GM12878 (cell line): ENCODE measurements at regions of chrX and their contacts with region 1.

Region 1: DNA sequence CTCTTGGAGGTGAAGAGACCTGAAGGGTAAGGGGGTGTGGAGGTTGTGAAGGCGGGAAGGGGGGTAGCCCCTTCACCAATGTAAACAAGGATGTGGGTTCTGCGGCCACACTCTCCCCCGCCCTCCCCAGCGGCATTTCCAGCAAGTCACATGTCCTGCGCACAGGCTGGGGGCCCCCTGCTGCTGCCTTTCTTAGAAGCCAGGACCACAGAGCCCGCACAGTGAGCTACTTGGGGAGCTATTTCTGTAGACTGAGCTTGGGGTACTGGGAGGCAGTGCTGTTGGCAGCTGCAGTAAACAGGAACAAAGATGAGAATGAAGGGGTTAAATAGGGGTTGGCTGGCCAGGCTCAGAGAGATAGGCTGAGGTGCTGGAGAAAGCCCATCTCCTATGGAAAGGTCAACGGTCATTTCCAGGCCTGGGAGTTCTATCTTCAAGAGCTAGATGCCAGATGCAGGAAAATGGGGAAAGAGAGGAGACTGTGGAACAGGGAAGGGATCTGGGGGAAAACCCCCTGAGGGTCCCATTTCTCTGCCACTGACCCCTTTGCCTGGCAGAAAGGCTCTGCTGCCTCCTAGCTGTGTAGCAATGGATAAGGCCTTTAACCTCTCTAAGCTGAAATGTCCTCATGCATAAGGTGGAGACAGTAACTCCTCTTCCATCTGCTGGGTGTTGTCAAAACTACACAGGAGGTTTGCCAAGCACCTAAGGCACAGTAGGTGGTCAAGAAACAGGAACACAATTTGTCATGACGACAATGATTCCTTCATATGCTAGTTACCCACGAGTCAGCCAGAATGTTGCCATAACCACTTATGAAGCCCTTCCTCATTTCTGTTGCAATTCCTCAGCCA is 18.5 kb upstream of the PIM2 start:
- DNase-seq: peak; percentile 79
- ATAC-seq: peak; percentile 74
- H3K4me3 ChIP-seq: peak overlapping the region; percentile 28; the same call in 1 of the 2 replicates
- H3K27ac ChIP-seq: peak overlapping the region; percentile 95
- H3K4me1 ChIP-seq: peaks cover 73% of the 10 kb centered on the region
- H3K27me3 ChIP-seq: no peaks in the 10 kb centered on the region
- CTCF ChIP-seq: peak; percentile 41 to 57 (median 56); a peak in 5 of 6 replicates
- EP300 ChIP-seq: peak; percentile 97 to 98
- POLR2A ChIP-seq: peak; percentile 65
- RAD21 ChIP-seq: peak; percentile 57

Region 2: DNA sequence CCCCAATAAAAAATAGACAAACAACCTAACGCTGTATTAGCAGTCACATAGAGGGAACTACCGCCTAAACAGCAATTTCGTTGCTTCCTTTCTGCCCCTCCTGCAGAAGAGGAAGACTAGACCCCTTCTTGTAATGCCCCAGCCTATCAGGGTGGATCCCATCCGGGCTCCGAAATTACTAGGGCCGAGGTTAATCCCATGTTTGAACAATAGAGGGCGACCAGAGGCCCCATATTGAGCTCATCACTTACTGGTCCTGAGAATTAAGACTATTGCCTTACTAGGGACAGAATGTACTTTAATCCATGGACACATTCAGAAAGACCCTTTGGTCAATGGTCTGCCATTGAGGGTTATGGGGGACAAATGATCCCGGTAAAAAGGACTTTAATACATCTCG is 854.1 kb before region 1 on chrX:
- CTCF ChIA-PET with region 1: no interaction called
- POLR2A ChIA-PET with region 1: no interaction called
- RAD21 ChIA-PET with region 1: no interaction called
- SMC1A ChIA-PET with region 1: no interaction called
- in situ Hi-C with region 1: no loop called
- intact Hi-C with region 1: loop called (anchors 5 kb)
- DNase-seq: no peak
- ATAC-seq: peak; percentile 94
- H3K4me3 ChIP-seq: no peak overlapping the region
- H3K27ac ChIP-seq: no peak overlapping the region
- H3K4me1 ChIP-seq: no peaks in the 10 kb centered on the region
- H3K27me3 ChIP-seq: no peaks in the 10 kb centered on the region
- CTCF ChIP-seq: peak; percentile 55 to 63 (median 57)
- EP300 ChIP-seq: no peak
- POLR2A ChIP-seq: no peak
- RAD21 ChIP-seq: peak; percentile 76

Region 3: DNA sequence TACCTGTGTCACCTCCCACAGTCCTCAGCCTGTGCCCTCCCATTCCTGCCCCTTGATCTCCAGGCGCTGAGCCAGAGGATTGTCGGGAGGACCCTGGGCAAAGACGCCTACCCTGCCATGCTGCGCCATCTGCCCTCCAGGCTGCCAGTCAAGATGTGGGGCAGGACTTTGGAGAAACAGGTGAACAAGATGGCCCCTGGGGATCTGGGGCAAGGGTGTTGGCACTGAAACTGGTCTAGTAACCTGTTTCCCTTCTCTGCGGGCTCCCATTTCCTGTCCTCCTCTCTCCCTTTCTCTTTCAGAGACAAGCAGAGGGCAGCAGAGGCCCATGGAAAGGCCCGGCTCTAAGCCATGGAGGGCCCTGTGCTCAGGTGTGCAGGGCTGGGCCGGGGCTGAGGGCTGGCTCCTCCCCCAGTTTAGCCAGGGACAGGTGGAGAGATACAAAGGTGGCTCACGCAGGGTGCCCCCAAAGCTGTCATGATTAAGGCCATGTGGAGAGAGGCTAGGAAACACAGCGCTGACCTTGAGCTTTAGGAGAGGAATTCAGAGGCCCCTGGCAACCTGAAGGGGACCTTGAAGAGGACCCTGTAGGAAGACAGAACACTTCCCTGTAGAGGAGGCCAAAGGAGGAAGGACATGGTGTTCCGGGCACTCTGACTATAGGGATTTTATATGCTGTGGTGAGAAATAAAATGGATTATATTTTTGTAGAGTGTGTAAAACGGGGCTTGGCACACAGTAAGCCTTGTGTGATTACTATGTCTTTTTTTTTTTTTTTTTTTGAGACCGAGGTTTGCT is 175.4 kb before region 1 on chrX and contains the start of gene GLOD5:
- CTCF ChIA-PET with region 1: no interaction called
- POLR2A ChIA-PET with region 1: no interaction called
- RAD21 ChIA-PET with region 1: no interaction called
- SMC1A ChIA-PET with region 1: no interaction called
- in situ Hi-C with region 1: no loop called
- intact Hi-C with region 1: no loop called
- DNase-seq: no peak
- ATAC-seq: peak; percentile 75
- H3K4me3 ChIP-seq: no peak within 1 kb of the TSS
- H3K27ac ChIP-seq: no peak within 1 kb of the TSS
- H3K4me1 ChIP-seq: no peaks in the 10 kb centered on the region
- H3K27me3 ChIP-seq: no peaks in the 10 kb centered on the region
- CTCF ChIP-seq: peak in 1 of 3 experiments; percentile 26; a peak in 2 of 6 replicates
- EP300 ChIP-seq: no peak
- POLR2A ChIP-seq: no peak
- RAD21 ChIP-seq: peak; percentile 53
- polyA plus RNA-seq, gene GLOD5: not detected

Region 4: DNA sequence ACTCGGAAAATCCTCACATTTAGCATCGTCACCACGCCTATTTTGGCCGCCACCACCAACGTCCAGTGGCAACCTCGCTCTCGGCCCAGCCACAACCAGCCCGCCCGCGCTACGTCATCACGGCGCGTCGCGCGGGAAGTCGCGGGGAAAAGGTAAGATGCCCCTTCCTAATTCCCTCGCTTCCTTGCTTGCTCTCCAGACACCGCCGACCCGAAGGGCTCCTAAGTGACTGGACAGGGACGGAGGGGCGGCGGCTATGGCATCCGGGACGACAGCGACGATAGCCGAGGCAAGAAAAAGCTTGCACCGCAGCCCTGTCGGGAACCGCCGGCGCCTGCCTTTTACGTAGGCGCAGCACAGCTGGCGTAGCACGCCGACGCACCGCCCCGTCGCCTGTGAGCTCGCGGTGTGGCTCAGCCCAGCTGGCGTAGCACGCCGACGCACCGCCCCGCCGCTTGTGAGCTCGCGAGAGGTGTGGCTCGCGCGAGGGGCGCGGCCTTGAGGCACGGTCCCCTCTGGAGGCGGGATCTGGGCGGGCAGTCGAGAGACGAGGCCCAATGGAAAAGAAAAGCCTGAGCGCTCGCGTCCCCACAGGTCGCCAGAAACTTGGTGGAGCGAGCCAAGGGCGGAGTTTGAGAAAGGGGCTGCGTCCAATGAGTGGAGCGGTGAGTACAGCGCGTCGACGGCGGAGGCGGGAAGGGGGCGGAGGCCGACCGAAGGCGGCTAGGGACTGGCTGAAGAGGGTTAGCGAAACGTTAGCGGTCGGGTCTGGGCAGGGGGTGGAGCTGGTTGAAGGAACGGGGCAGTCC is 135.8 kb before region 1 on chrX and contains the start of gene HDAC6:
- CTCF ChIA-PET with region 1: no interaction called
- POLR2A ChIA-PET with region 1: interaction called, 5 read pairs
- RAD21 ChIA-PET with region 1: interaction called, 7 read pairs
- SMC1A ChIA-PET with region 1: interaction called, 3 read pairs
- in situ Hi-C with region 1: no loop called
- intact Hi-C with region 1: loop called (anchors 5 kb)
- DNase-seq: peak; percentile 94
- ATAC-seq: peak; percentile 90
- H3K4me3 ChIP-seq: peak within 1 kb of the TSS; percentile 69
- H3K27ac ChIP-seq: peak within 1 kb of the TSS; percentile 94
- H3K4me1 ChIP-seq: no peaks in the 10 kb centered on the region
- H3K27me3 ChIP-seq: no peaks in the 10 kb centered on the region
- CTCF ChIP-seq: no peak
- EP300 ChIP-seq: no peak
- POLR2A ChIP-seq: peak; percentile 75
- RAD21 ChIP-seq: no peak
- polyA plus RNA-seq, gene HDAC6: 8.3 to 17.5 TPM

Region 5: DNA sequence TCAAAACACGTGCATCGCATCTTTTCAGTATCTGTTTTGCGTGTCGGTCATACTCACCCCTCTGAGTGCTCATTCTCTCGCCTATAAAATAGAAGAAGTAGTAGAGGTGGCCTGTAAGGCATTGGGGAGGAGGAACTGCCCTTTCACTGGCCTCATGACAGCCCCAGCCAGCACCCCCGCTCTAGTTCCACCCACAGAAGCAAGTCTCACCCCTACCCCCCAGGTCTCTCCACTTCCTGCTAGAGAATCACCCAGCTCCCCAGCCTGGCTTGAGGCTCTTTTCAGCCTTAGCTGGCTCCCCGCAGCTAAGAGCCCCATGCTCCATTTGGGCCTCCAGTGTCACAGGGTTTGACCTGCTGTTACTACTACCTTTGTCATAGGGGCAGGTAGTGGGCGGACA is 123.6 kb before region 1 on chrX:
- CTCF ChIA-PET with region 1: no interaction called
- POLR2A ChIA-PET with region 1: no interaction called
- RAD21 ChIA-PET with region 1: no interaction called
- SMC1A ChIA-PET with region 1: no interaction called
- in situ Hi-C with region 1: no loop called
- intact Hi-C with region 1: no loop called
- DNase-seq: no peak
- ATAC-seq: no peak
- H3K4me3 ChIP-seq: no peak overlapping the region
- H3K27ac ChIP-seq: no peak overlapping the region
- H3K4me1 ChIP-seq: no peaks in the 10 kb centered on the region
- H3K27me3 ChIP-seq: no peaks in the 10 kb centered on the region
- CTCF ChIP-seq: no peak
- EP300 ChIP-seq: no peak
- POLR2A ChIP-seq: no peak
- RAD21 ChIP-seq: no peak

Region 6: DNA sequence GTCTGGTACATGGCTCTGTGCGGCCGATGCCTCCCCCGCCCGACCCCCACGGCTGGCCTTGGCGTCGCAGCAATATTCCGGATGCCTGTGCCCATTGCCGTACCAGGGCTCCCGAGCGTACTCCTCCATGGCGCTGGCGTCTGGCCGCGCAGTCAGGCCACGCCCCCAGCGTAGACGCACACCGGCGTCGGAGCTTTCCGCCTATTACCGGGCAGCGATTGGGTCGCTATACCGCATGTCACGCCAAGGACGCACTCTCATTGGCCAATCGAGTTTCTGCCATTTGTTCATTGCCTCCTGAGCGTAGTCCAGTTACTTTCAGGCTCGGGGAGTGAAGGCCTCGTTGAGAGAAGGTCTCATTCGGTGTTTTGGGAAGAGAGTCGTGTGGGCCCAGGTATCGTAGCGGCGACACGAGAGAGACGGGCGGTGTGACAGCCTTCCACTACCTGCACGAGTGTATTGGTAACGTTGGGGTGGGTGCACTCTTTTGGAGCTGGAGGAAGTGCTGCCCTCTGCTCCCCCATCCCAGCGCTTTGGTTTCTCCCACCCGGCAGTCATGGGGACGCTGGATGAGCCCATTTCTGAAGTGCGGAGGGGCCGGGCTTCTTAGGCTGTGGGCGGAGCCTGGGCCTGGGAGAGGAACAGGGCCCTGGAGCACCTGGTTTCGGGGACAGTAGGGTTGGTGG is 39.5 kb before region 1 on chrX and contains the starts of genes PQBP1 and TIMM17B:
- CTCF ChIA-PET with region 1: interaction called, 7 read pairs
- POLR2A ChIA-PET with region 1: interaction called, 10 read pairs
- RAD21 ChIA-PET with region 1: interaction called, 15 read pairs
- SMC1A ChIA-PET with region 1: interaction called, 6 read pairs
- in situ Hi-C with region 1: no loop called
- intact Hi-C with region 1: no loop called
- DNase-seq: peak; percentile 92
- ATAC-seq: peak; percentile 94
- H3K4me3 ChIP-seq: peak within 1 kb of the TSS; percentile 77
- H3K27ac ChIP-seq: peak within 1 kb of the TSS; percentile 93
- H3K4me1 ChIP-seq: no peaks in the 10 kb centered on the region
- H3K27me3 ChIP-seq: no peaks in the 10 kb centered on the region
- CTCF ChIP-seq: no peak
- EP300 ChIP-seq: no peak
- POLR2A ChIP-seq: peak; percentile 86
- RAD21 ChIP-seq: no peak
- polyA plus RNA-seq, gene PQBP1: 12.5 to 28.0 TPM
- polyA plus RNA-seq, gene TIMM17B: 4.5 to 18.3 TPM

Region 7: DNA sequence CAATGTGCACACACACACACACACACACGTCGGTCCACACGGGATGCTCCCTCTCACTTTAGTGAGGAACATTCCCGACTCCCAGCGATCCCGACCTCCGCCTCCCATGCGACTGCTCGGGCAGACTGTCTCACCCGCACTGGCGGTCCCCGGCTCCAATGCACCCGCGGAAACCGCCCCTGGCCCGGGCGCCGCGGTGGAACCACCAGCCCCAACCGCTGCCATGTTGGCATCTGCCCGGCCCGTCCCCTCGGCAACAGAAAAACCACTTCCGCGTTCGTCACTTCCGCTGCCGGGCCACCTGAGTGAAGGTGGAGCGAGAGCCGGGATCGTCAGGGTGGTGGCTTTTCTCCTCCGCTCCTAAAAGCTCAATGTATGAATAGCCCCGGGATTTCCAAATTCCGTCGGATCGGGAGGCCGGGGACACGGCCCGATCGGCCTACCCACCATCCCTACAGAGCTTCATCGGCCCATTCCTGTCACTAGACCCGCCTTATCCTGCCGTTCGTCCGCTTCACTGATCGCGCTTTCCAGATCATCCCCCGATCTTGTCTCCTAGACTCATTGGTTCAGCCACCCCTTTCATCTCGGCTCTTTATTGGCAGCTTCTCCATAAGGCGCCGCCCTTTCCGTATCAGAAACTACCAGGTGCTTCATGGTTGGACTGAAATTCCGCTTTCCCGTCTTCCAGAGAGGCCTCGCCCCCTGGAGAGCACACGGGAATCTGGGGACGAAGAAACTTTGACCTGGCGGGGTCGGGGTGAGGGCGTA is 25.7 kb before region 1 on chrX and contains the start of gene SLC35A2:
- CTCF ChIA-PET with region 1: interaction called, 9 read pairs
- POLR2A ChIA-PET with region 1: interaction called, 11 read pairs
- RAD21 ChIA-PET with region 1: interaction called, 10 read pairs
- SMC1A ChIA-PET with region 1: interaction called, 9 read pairs
- in situ Hi-C with region 1: no loop called
- intact Hi-C with region 1: no loop called
- DNase-seq: no peak
- ATAC-seq: peak; percentile 86
- H3K4me3 ChIP-seq: peak within 1 kb of the TSS; percentile 62
- H3K27ac ChIP-seq: peak within 1 kb of the TSS; percentile 68
- H3K4me1 ChIP-seq: no peaks in the 10 kb centered on the region
- H3K27me3 ChIP-seq: no peaks in the 10 kb centered on the region
- CTCF ChIP-seq: no peak
- EP300 ChIP-seq: no peak
- POLR2A ChIP-seq: peak; percentile 89; the same call in 1 of the 2 replicates
- RAD21 ChIP-seq: no peak
- polyA plus RNA-seq, gene SLC35A2: 2.1 to 6.8 TPM

Region 8: GRCh38 chrX:48917139-48918001 is 19.9 kb before region 1 on chrX:
- CTCF ChIA-PET with region 1: interaction called, 9 read pairs
- POLR2A ChIA-PET with region 1: interaction called, 21 read pairs
- RAD21 ChIA-PET with region 1: interaction called, 10 read pairs
- SMC1A ChIA-PET with region 1: interaction called, 12 read pairs
- in situ Hi-C with region 1: no loop called
- intact Hi-C with region 1: loop called (anchors 1 kb)
- DNase-seq: peak; percentile 88
- ATAC-seq: peak; percentile 62
- H3K4me3 ChIP-seq: peak overlapping the region; percentile 65
- H3K27ac ChIP-seq: peak overlapping the region; percentile 83
- H3K4me1 ChIP-seq: peaks cover 9% of the 10 kb centered on the region
- H3K27me3 ChIP-seq: no peaks in the 10 kb centered on the region
- CTCF ChIP-seq: peak; percentile 86 to 97 (median 91)
- EP300 ChIP-seq: peak in 1 of 2 experiments; percentile 67; a peak in 2 of 4 replicates
- POLR2A ChIP-seq: peak; percentile 67
- RAD21 ChIP-seq: peak; percentile 55

Region 9: DNA sequence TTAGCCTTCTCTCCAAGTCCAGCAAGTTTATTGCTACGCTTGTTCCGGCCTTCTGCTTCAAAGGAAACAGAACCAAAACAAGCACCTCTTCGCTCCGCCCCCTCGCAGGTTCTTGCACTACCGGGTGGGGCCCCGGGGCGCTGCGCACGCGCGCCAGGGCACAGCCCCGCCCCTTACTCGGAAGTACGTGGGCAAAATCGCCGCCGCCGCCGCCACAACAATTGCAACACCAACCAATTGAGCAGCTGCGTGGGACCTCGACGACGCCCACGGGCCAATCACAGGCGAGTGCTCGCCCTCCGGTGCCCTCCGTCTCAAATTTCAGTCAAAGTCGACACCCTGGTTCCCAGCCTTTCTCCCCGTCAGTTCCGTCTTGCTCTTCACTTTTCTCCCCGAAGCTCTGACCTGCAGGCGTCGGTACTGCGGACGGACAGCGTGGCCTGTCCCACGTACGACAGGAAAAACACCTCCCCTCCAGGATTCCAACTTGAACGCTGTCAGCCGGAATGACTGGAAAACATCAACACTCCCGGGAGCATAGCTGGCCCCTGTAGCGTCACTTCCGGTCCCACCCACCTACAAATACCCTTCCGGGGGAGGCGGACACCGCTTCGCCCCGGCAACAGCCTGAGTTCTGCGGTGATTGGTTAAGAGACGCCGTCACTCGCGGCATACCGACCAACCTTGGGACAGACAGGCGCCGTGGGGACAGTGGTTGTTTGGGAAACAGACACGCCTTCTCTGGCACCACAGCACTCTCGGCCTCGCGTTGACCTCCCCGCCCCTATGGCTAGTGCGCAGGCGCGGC is 20.8 kb after region 1 on chrX:
- CTCF ChIA-PET with region 1: interaction called, 4 read pairs
- POLR2A ChIA-PET with region 1: interaction called, 12 read pairs
- RAD21 ChIA-PET with region 1: interaction called, 7 read pairs
- SMC1A ChIA-PET with region 1: interaction called, 8 read pairs
- in situ Hi-C with region 1: no loop called
- intact Hi-C with region 1: no loop called
- DNase-seq: peak; percentile 87
- ATAC-seq: peak; percentile 93
- H3K4me3 ChIP-seq: peak overlapping the region; percentile 79; the same call in 1 of the 2 replicates
- H3K27ac ChIP-seq: peak overlapping the region; percentile 92
- H3K4me1 ChIP-seq: peaks cover 7% of the 10 kb centered on the region
- H3K27me3 ChIP-seq: no peaks in the 10 kb centered on the region
- CTCF ChIP-seq: no peak
- EP300 ChIP-seq: no peak
- POLR2A ChIP-seq: peak; percentile 77
- RAD21 ChIP-seq: no peak